OCI-LY7 (cell line): ENCODE measurements at regions of chr3 and their contacts with region 1.

Region 1: GRCh38 chr3:130048726-130049125 is 32.9 kb upstream of the ALG1L2 start:
- DNase-seq: no peak
- H3K4me3 ChIP-seq: no peak overlapping the region
- H3K27ac ChIP-seq: no peak overlapping the region
- H3K4me1 ChIP-seq: no peaks in the 10 kb centered on the region
- CTCF ChIP-seq: no peak

Region 2: DNA sequence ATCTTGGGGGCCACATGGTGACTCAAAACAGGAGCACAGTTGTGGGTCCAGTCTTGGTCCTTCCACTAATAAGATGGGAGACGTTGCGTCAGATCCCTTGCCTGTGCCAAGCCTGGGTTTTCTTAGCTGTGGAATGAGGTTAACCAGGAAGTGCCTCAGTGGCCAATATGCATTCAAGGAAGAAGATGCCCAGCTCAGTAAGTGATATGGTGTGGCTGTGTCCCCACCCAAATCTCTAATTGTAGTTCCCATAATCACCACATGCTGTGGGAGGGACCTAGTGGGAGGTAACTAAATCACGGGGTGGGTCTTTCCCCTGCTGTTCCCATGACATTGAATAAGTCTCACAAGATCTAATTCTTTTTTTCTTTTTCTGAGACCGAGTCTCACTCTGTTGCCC is 39.3 kb after region 1 on chr3:
- CTCF ChIA-PET with region 1: no interaction called
- POLR2A ChIA-PET with region 1: no interaction called
- intact Hi-C with region 1: loop called (anchors 1 kb)
- DNase-seq: no peak
- H3K4me3 ChIP-seq: no peak overlapping the region
- H3K27ac ChIP-seq: no peak overlapping the region
- H3K4me1 ChIP-seq: peaks cover 2% of the 10 kb centered on the region
- CTCF ChIP-seq: no peak